ENCODE measurements at regions of chr1 and their contacts with region 1.

Region 1: GRCh38 chr1:3069491-3070303 is 694 bp downstream of the PRDM16 start:
- DNase-seq: peak; percentile 11
- H3K4me3 ChIP-seq: peak overlapping the region in 2 of 3 experiments; percentile 41 to 51
- H3K27ac ChIP-seq: no peak overlapping the region
- H3K4me1 ChIP-seq: peaks cover 2% of the 10 kb centered on the region
- H3K27me3 ChIP-seq: peaks cover 36% of the 10 kb centered on the region
- CTCF ChIP-seq: no peak

Region 2: GRCh38 chr1:3004285-3005205 is 65.2 kb before region 1 on chr1:
- CTCF ChIA-PET with region 1: no interaction called
- dilution Hi-C with region 1: loop called (anchors 5 kb)
- in situ Hi-C with region 1: no loop called
- intact Hi-C with region 1: no loop called
- DNase-seq: no peak
- H3K4me3 ChIP-seq: no peak overlapping the region
- H3K27ac ChIP-seq: no peak overlapping the region
- H3K4me1 ChIP-seq: no peaks in the 10 kb centered on the region
- H3K27me3 ChIP-seq: no peaks in the 10 kb centered on the region
- CTCF ChIP-seq: no peak

Region 3: GRCh38 chr1:3119725-3120124 is 50.0 kb after region 1 on chr1:
- CTCF ChIA-PET with region 1: no interaction called
- dilution Hi-C with region 1: loop called (anchors 5 kb)
- in situ Hi-C with region 1: no loop called
- intact Hi-C with region 1: no loop called
- DNase-seq: no peak
- H3K4me3 ChIP-seq: no peak overlapping the region
- H3K27ac ChIP-seq: no peak overlapping the region
- H3K4me1 ChIP-seq: no peaks in the 10 kb centered on the region
- H3K27me3 ChIP-seq: no peaks in the 10 kb centered on the region
- CTCF ChIP-seq: no peak